Astrocyte of the cerebellum (primary cell): ENCODE measurements at regions of chr16 and their contacts with region 1.

Region 1: DNA sequence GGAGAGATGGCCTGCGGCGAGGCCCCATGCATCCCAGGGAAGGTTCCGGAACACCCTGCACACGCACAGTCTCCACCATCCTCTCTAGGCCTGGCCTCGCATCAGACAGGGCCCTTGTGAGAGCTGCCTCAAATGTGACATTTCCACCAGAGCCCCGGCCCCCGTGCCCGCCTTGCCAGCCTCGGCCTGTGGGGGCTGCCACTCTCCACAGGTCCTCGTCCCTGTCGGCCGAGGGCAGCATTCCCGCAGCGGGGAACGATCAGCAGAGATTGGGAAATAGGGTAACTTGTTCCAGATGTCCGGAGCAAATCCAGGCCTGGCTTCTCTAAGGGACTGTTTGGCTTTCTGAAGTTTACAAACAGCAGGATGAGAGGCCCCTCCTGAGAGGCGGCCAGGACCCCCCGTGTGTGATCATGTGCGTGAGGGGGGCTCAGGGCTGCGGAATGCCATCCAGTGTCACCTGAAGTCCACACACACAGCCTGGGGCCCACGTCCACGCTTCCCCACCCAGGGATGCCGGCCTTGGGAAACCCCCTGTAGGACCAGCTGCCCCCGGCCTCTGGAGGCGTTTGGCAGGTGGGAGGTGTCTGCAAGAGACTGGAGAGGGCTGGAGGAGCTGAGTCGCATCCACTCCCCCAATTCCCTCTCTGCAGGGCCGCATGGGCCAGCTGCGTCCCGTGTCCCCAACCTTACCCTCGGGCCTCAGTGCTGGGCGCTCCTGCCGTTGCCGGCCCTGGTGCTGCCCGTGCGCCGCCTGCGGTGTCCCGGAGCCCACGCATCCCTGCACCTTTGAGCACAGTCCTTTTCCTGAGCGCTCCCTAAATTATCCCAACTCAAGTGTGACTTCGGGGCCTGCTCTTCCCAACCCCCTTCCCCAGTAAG is 70.4 kb downstream of the ZDHHC7 start:
- DNase-seq: no peak
- H3K4me3 ChIP-seq: no peak overlapping the region
- CTCF ChIP-seq: no peak

Region 2: DNA sequence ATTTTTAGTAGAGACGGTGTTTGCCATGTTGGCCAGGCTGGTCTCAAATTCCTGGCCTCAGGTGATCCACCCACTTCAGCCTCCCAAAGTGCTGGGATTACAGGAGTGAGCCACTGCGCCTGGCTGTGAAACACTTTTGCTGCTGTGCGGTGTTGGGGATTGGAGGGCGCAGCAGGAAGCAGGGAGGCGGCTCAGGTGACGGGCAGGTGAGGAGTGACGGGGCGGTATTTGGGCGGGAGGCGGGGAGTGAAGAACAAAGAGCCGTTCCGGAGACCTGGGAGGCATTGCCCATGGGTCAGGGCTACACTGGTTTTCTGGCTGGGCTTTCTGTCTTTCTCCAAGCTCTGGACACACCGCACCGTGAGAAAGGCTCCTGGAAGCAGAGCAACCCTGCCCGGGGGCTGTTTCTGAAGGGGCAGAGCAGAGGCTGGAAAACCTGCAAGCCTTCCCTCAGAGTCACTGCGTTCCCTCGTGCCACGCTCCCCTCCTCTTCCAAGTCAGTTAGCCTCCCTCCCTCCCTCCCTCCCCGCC is 99.1 kb before region 1 on chr16:
- in situ Hi-C with region 1: loop called (anchors 5 kb)
- DNase-seq: no peak
- H3K4me3 ChIP-seq: no peak overlapping the region
- CTCF ChIP-seq: no peak

Region 3: GRCh38 chr16:84864326-84864955 is 76.5 kb before region 1 on chr16:
- in situ Hi-C with region 1: no loop called
- DNase-seq: no peak
- H3K4me3 ChIP-seq: no peak overlapping the region
- CTCF ChIP-seq: no peak

Region 4: GRCh38 chr16:84976644-84977400 is 35.9 kb after region 1 on chr16:
- in situ Hi-C with region 1: loop called (anchors 5 kb)
- DNase-seq: no peak
- H3K4me3 ChIP-seq: no peak overlapping the region
- CTCF ChIP-seq: no peak

Region 5: DNA sequence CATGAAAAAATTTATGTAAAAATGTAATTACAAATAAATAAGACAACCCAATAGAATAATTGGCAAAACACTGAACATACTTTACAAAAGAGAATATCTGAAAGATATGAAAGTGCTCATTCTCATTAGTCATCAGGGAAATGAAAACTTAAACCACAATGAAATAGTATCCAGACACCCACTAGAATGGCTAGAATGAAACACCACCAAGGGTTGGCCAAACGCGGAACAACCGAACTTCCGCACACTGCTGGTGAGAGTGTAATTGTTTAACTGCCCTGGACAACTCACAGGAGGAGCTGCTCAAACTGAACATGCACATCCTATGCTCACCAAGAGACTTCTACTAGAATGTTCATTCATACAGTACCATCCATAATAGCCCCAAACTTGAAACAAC is 76.2 kb after region 1 on chr16:
- in situ Hi-C with region 1: no loop called
- DNase-seq: no peak
- H3K4me3 ChIP-seq: no peak overlapping the region
- CTCF ChIP-seq: no peak

Region 6: DNA sequence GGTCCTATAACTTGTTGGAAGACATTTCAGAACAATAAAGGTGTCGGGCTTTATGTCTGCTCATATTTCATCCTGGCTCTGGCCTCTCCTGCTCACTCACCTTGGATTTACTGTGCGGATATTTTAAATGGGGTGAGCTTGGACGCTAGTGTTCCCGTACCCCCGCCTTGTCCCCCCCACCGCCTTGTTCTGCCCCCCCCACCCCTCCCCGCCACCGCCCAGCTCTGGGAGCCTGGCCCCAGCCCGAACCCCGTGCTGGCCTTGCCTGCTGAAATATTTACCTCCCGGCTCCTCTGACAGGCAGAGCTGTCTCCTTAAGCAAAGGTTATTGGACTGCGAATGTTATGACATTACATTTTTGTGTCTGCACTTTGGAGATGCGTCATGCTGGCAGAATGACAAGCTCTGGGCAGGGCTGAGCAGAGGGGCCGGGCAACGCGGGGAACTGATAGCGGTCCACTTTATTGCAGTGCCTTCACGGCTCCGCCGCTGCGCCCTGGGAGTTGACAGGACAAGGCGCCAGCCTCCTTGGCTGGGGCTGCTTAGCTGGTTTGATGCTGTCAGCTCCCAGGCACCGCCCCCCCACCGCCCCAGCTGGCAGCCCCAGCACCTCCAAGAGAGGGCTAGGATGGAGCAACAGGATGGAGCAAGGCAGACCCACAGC is 449.7 kb after region 1 on chr16:
- in situ Hi-C with region 1: no loop called
- DNase-seq: peak; percentile 79
- H3K4me3 ChIP-seq: no peak overlapping the region
- CTCF ChIP-seq: no peak